Activated CD4-positive, alpha-beta T cell treated with anti-CD3 and anti-CD28 coated beads for 36 hours (primary cell): ENCODE measurements at regions of chr7 and their contacts with region 1.

Region 1: GRCh38 chr7:23597094-23598091 is at the start of gene CCDC126:
- DNase-seq: peak; percentile 91
- ATAC-seq: peak; percentile 57
- H3K4me3 Mint-ChIP-seq: peak within 1 kb of the TSS; percentile 81
- H3K27ac Mint-ChIP-seq: peak within 1 kb of the TSS; percentile 81
- H3K4me1 Mint-ChIP-seq: peaks cover 61% of the 10 kb centered on the region
- H3K27me3 Mint-ChIP-seq: peaks cover 5% of the 10 kb centered on the region
- total RNA-seq, gene CCDC126: 4.6 to 5.6 TPM

Region 2: DNA sequence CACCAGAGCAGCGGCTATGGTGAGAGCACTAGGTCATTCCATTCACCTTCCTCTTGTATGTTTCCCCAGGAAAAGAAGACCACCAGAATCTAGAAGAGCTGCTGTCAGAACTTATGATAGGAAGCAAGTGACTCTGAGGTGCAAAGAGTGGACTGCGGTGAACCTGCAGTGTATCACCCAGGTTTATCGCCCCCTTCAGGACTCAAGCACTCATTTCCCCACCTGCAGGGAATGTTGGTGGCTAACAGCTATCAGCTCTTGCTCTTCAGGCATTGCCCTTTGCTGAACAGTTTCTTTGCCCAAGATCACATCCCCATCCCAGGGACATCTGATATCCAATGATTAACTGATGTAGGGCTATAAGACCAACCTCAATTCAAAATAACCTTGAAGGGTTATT is 936.7 kb before region 1 on chr7:
- CTCF ChIA-PET with region 1: no interaction called
- POLR2A ChIA-PET with region 1: no interaction called
- intact Hi-C with region 1: no loop called
- DNase-seq: no peak
- ATAC-seq: no peak
- H3K4me3 Mint-ChIP-seq: no peak overlapping the region
- H3K27ac Mint-ChIP-seq: no peak overlapping the region
- H3K4me1 Mint-ChIP-seq: peaks cover 33% of the 10 kb centered on the region
- H3K27me3 Mint-ChIP-seq: peaks cover 20% of the 10 kb centered on the region

Region 3: DNA sequence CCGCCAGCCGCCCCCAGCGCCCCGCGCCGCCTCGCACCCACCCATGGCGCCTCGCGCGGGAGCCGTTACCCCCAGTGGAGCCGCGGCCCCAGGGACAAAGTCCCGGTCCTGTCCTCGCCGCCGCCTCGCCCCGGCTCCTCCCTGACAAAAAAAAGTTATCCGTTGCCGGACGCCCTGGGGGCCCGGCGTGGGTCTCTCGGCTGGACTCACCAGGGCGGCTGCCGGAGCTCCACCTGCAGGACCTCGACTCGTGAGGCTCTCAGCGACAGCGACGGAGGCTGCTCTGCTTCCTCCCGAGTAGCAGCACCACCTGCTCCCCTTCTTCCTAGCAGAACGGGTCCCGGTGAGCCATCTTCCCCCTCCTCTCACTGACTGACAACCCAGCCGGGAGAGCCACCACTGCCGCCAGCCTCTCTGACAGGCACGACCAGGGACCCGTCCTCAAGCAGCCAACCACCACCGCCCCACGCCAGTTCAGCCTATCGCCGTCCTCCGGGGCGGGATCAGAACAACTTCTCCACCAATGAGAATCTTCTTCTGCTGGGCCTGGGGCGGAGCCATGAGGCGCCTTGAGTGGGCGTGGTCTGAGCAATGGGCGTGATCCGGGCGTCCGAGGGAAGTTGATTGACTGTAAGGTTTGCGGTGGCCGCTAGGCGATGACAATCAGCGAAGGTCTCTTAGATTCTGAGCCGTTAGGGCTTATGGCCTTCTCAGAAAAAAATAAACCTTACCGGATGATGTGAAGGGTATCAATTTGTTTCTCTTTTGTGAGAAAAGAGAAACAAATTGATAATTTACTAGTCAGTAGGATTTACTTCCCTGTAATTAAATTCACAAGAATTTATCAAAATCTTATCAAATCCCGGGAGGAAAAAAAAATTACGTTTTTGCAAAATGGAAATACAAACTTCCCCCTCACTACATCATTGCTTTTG is 583.4 kb before region 1 on chr7 and contains the start of gene HYCC1:
- CTCF ChIA-PET with region 1: no interaction called
- POLR2A ChIA-PET with region 1: no interaction called
- intact Hi-C with region 1: loop called in 1 of 2 experiments (anchors 5 kb)
- DNase-seq: peak; percentile 99
- ATAC-seq: peak; percentile 99
- H3K4me3 Mint-ChIP-seq: peak within 1 kb of the TSS; percentile 92
- H3K27ac Mint-ChIP-seq: peak within 1 kb of the TSS; percentile 83
- H3K4me1 Mint-ChIP-seq: peaks cover 24% of the 10 kb centered on the region
- H3K27me3 Mint-ChIP-seq: peaks cover 3% of the 10 kb centered on the region
- total RNA-seq, gene HYCC1: 19.2 to 23.9 TPM

Region 4: GRCh38 chr7:23373151-23374004 is 224.0 kb before region 1 on chr7:
- CTCF ChIA-PET with region 1: no interaction called
- POLR2A ChIA-PET with region 1: no interaction called
- intact Hi-C with region 1: loop called (anchors 1 kb)
- DNase-seq: peak; percentile 80
- ATAC-seq: peak; percentile 84
- H3K4me3 Mint-ChIP-seq: peak overlapping the region; percentile 16
- H3K27ac Mint-ChIP-seq: peak overlapping the region; percentile 84
- H3K4me1 Mint-ChIP-seq: peaks cover 65% of the 10 kb centered on the region
- H3K27me3 Mint-ChIP-seq: peaks cover 10% of the 10 kb centered on the region

Region 5: GRCh38 chr7:23679898-23680413 is 82.6 kb after region 1 on chr7 and contains the start of gene FAM221A:
- CTCF ChIA-PET with region 1: interaction called, 3 read pairs
- POLR2A ChIA-PET with region 1: no interaction called
- intact Hi-C with region 1: loop called (anchors 1 to 2 kb)
- DNase-seq: peak; percentile 93
- ATAC-seq: peak; percentile 98
- H3K4me3 Mint-ChIP-seq: peak within 1 kb of the TSS; percentile 85
- H3K27ac Mint-ChIP-seq: peak within 1 kb of the TSS; percentile 76
- H3K4me1 Mint-ChIP-seq: peaks cover 8% of the 10 kb centered on the region
- H3K27me3 Mint-ChIP-seq: no peaks in the 10 kb centered on the region
- total RNA-seq, gene FAM221A: 5.3 to 8.1 TPM

Region 6: GRCh38 chr7:23863209-23863798 is 265.9 kb after region 1 on chr7:
- CTCF ChIA-PET with region 1: no interaction called
- POLR2A ChIA-PET with region 1: no interaction called
- intact Hi-C with region 1: no loop called
- DNase-seq: peak; percentile 38
- ATAC-seq: peak; percentile 47
- H3K4me3 Mint-ChIP-seq: no peak overlapping the region
- H3K27ac Mint-ChIP-seq: no peak overlapping the region
- H3K4me1 Mint-ChIP-seq: peaks cover 5% of the 10 kb centered on the region
- H3K27me3 Mint-ChIP-seq: peaks cover 9% of the 10 kb centered on the region

Region 7: GRCh38 chr7:24757353-24758275 is 1160.2 kb after region 1 on chr7 and contains the start of gene GSDME:
- CTCF ChIA-PET with region 1: no interaction called
- POLR2A ChIA-PET with region 1: no interaction called
- intact Hi-C with region 1: loop called in 1 of 2 experiments (anchors 2 kb)
- DNase-seq: peak; percentile 62
- ATAC-seq: peak; percentile 52
- H3K4me3 Mint-ChIP-seq: peak within 1 kb of the TSS; percentile 78
- H3K27ac Mint-ChIP-seq: peak within 1 kb of the TSS; percentile 85
- H3K4me1 Mint-ChIP-seq: peaks cover 33% of the 10 kb centered on the region
- H3K27me3 Mint-ChIP-seq: peaks cover 39% of the 10 kb centered on the region
- total RNA-seq, gene GSDME: 6.2 to 8.5 TPM

Region 8: GRCh38 chr7:25125137-25125946 is 1527.9 kb after region 1 on chr7 and contains the start of gene CYCS:
- CTCF ChIA-PET with region 1: no interaction called
- POLR2A ChIA-PET with region 1: no interaction called
- intact Hi-C with region 1: loop called in 1 of 2 experiments (anchors 2 kb)
- DNase-seq: peak; percentile 100
- ATAC-seq: peak; percentile 97
- H3K4me3 Mint-ChIP-seq: peak within 1 kb of the TSS; percentile 97
- H3K27ac Mint-ChIP-seq: peak within 1 kb of the TSS; percentile 98
- H3K4me1 Mint-ChIP-seq: peaks cover 27% of the 10 kb centered on the region
- H3K27me3 Mint-ChIP-seq: no peaks in the 10 kb centered on the region
- total RNA-seq, gene CYCS: 222 to 237 TPM